KBM-7 (cell line): ENCODE measurements at regions of chr14 and their contacts with region 1.

Region 1: GRCh38 chr14:54329082-54329695 is 67.6 kb upstream of the CDKN3 start:
- DNase-seq: peak; percentile 47

Region 2: DNA sequence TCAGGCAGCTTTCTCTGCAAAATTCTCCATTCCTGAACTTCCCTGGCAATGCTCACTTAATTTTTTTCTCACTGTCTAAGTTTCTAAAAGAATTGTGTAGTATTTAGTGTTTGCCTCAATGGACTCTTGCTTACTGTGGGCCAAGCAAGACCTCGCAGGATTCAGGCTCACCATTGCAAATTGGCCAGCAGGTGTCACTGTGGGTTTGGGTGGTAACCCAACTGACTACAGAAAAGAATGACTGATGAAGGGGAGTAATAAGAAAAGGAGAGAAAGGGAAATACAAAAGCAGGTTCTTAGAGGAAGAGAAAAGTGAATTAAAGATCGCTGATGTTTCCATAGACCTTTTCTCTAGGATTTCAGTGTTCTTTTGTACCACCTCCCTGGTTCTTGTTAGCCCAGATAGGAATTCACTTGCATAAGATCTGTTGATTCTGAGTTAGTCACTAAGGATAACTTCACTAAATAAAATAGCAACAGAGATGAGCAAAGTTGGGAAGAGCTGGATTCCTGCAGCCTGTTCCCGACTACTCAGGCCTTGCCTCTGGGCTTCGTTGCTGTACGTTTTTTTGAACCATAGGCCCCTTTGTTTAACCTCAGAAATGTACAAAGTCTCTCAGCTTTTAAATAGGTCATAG is 789.6 kb before region 1 on chr14:
- in situ Hi-C with region 1: loop called (anchors 25 kb)
- DNase-seq: peak; percentile 81

Region 3: GRCh38 chr14:53953002-53953827 is 376.0 kb before region 1 on chr14:
- in situ Hi-C with region 1: loop called (anchors 25 kb)
- DNase-seq: peak; percentile 67

Region 4: DNA sequence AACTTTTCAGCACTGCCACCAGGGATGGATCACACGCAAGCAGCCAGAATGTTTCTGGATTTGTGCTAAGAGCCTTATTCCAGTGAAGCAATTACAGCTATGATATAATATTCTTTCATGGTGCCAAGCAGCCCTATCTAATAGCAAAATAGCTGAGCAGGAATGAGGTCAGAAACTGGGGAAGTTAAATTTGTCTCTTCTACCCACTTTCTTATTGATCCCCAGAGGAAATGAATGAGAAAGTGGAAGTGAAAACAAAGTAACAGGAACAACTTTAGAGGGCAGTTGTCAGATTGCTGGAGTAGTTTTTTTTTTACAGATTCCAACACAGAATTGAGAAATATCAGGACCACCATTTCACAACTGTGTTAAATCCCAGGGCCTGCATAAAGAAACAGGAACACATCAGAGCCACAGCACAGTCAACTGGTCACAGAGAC is 528.7 kb after region 1 on chr14:
- in situ Hi-C with region 1: no loop called
- DNase-seq: peak; percentile 62